ENCODE measurements at regions of chr2 and their contacts with region 1.

Region 1: DNA sequence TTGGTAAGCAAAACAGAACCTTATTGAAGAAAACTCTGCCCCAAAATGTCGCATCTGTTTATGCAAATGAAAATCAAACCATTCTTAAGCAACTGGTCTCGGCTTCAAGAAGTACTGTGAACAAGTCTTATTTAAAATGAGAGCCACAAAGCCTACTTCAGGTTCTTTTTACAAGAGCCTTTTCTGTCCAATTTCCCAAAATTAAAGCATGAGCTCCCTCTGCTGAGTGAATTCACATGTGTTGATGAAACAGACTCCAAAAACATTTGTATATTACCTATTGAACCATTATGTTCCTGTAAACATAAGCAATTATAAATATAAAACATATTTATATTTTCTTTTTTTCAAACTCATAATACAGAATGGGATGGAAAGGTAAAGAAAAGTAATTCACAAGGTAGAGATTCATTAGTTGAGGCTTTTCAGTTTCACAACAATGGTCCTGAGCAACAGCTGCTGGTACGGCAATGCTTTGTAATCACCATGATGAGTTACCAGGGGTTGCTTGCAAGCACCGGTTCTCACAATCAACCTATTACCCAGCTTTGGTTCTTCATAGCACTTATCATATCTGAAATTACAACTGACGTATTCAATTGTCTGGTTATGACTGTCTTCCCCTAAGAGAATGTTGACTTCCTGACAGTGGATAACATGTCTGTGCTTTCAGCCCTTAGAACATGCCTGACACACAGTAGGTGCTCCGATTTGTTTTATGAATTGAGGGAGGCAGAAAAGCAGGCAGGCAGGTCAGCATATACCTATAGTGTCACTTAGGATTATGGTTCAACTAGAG is 108.4 kb upstream of the BZW1 start:
- DNase-seq: peak; percentile 72
- H3K4me3 ChIP-seq: no peak overlapping the region
- H3K27ac ChIP-seq: no peak overlapping the region
- H3K4me1 ChIP-seq: peaks cover 21% of the 10 kb centered on the region
- H3K27me3 ChIP-seq: no peaks in the 10 kb centered on the region
- CTCF ChIP-seq: peak; percentile 63

Region 2: GRCh38 chr2:200483729-200484198 is 219.6 kb before region 1 on chr2:
- CTCF ChIA-PET with region 1: interaction called, 10 read pairs
- POLR2A ChIA-PET with region 1: no interaction called
- intact Hi-C with region 1: loop called (anchors 1 kb)
- DNase-seq: peak; percentile 40
- H3K4me3 ChIP-seq: no peak overlapping the region
- H3K27ac ChIP-seq: no peak overlapping the region
- H3K4me1 ChIP-seq: no peaks in the 10 kb centered on the region
- H3K27me3 ChIP-seq: no peaks in the 10 kb centered on the region
- CTCF ChIP-seq: peak; percentile 59

Region 3: GRCh38 chr2:200618587-200619021 is 84.7 kb before region 1 on chr2:
- CTCF ChIA-PET with region 1: interaction called, 3 read pairs
- POLR2A ChIA-PET with region 1: no interaction called
- intact Hi-C with region 1: loop called (anchors 5 kb)
- DNase-seq: peak; percentile 76
- H3K4me3 ChIP-seq: no peak overlapping the region
- H3K27ac ChIP-seq: no peak overlapping the region
- H3K4me1 ChIP-seq: peaks cover 5% of the 10 kb centered on the region
- H3K27me3 ChIP-seq: no peaks in the 10 kb centered on the region
- CTCF ChIP-seq: peak; percentile 58

Region 4: GRCh38 chr2:200677721-200678585 is 25.4 kb before region 1 on chr2:
- CTCF ChIA-PET with region 1: no interaction called
- POLR2A ChIA-PET with region 1: no interaction called
- intact Hi-C with region 1: no loop called
- DNase-seq: no peak
- H3K4me3 ChIP-seq: no peak overlapping the region
- H3K27ac ChIP-seq: no peak overlapping the region
- H3K4me1 ChIP-seq: no peaks in the 10 kb centered on the region
- H3K27me3 ChIP-seq: no peaks in the 10 kb centered on the region
- CTCF ChIP-seq: no peak

Region 5: GRCh38 chr2:200864176-200864976 is 161.1 kb after region 1 on chr2 and contains the start of gene CLK1:
- CTCF ChIA-PET with region 1: no interaction called
- POLR2A ChIA-PET with region 1: interaction called, 13 read pairs
- intact Hi-C with region 1: no loop called
- DNase-seq: peak; percentile 97
- H3K4me3 ChIP-seq: peak within 1 kb of the TSS; percentile 70
- H3K27ac ChIP-seq: peak within 1 kb of the TSS; percentile 98
- H3K4me1 ChIP-seq: peaks cover 10% of the 10 kb centered on the region
- H3K27me3 ChIP-seq: no peaks in the 10 kb centered on the region
- CTCF ChIP-seq: no peak
- total RNA-seq, gene CLK1: 69.6 and 73.3 TPM in 2 replicates

Region 6: DNA sequence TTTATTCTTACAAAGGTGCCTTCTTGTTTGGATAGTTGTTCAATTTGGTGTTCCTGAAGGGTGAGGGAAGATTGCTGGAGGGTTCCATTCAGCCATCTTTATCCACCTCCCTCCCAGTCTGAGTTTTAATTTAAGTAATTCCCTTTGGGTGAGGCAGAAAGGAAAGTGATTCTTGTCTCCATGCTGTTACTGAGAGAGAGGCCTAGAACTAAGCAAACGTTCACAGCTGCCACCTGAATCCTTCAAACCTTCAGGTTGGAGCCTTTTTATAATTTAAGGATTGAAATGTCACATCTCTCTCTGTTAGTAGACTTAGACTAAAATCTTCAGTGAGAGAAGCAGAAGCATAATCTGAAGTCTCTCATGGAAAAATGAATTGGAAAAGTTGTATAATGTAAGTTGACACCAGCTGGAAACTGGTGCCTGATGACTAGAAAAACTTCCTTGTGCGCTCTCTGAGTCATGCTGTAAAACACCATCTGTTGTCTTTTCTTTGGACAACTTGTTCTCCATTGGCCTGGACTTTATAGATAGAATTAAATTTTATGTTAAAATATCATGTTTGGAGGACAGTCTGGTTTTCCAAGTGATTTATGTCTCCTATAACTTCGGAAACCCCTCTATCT is 762.8 kb after region 1 on chr2:
- CTCF ChIA-PET with region 1: no interaction called
- POLR2A ChIA-PET with region 1: no interaction called
- intact Hi-C with region 1: no loop called
- DNase-seq: peak; percentile 12
- H3K4me3 ChIP-seq: no peak overlapping the region
- H3K27ac ChIP-seq: no peak overlapping the region
- H3K4me1 ChIP-seq: peaks cover 3% of the 10 kb centered on the region
- H3K27me3 ChIP-seq: no peaks in the 10 kb centered on the region
- CTCF ChIP-seq: no peak